ENCODE measurements at regions of chr3 and their contacts with region 1.

Region 1: GRCh38 chr3:198080521-198081280 is 120.7 kb downstream of the LMLN start:
- DNase-seq: no peak
- H3K4me3 ChIP-seq: peak overlapping the region; percentile 47
- CTCF ChIP-seq: peak; percentile 60

Region 2: DNA sequence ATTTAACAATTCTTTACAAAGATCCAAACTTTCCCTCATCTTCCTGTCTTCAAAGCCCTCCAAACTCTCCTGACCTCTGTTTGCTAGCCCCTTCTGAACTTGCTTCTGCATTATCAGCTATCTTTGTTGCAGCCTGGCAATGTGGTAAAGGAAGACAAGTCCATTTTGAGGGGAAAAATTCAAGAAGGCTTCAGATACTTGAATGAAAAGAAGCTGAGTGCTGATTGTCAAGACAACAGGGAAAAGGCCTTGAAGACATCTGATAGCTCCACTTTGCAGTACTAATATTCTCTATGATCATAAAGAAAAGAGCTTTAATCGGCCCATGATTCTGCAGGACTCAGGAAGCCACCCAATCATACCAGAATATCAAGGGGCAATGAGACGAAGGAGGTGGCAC is 28.9 kb before region 1 on chr3:
- CTCF ChIA-PET with region 1: interaction called, 11 read pairs
- POLR2A ChIA-PET with region 1: no interaction called
- DNase-seq: no peak
- H3K4me3 ChIP-seq: no peak overlapping the region
- CTCF ChIP-seq: no peak

Region 3: GRCh38 chr3:198064420-198064819 is 16.3 kb before region 1 on chr3:
- CTCF ChIA-PET with region 1: interaction called, 23 read pairs
- POLR2A ChIA-PET with region 1: interaction called, 3 read pairs
- DNase-seq: no peak
- H3K4me3 ChIP-seq: no peak overlapping the region
- CTCF ChIP-seq: no peak

Region 4: GRCh38 chr3:198093112-198093679 is 12.5 kb after region 1 on chr3:
- CTCF ChIA-PET with region 1: interaction called, 36 read pairs
- POLR2A ChIA-PET with region 1: no interaction called
- DNase-seq: no peak
- H3K4me3 ChIP-seq: no peak overlapping the region
- CTCF ChIP-seq: no peak

Region 5: GRCh38 chr3:198112031-198112430 is 31.3 kb after region 1 on chr3:
- CTCF ChIA-PET with region 1: interaction called, 13 read pairs
- POLR2A ChIA-PET with region 1: no interaction called
- DNase-seq: no peak
- H3K4me3 ChIP-seq: no peak overlapping the region
- CTCF ChIP-seq: no peak